AG04449 (cell line): ENCODE measurements at regions of chr1 and their contacts with region 1.

Region 1: DNA sequence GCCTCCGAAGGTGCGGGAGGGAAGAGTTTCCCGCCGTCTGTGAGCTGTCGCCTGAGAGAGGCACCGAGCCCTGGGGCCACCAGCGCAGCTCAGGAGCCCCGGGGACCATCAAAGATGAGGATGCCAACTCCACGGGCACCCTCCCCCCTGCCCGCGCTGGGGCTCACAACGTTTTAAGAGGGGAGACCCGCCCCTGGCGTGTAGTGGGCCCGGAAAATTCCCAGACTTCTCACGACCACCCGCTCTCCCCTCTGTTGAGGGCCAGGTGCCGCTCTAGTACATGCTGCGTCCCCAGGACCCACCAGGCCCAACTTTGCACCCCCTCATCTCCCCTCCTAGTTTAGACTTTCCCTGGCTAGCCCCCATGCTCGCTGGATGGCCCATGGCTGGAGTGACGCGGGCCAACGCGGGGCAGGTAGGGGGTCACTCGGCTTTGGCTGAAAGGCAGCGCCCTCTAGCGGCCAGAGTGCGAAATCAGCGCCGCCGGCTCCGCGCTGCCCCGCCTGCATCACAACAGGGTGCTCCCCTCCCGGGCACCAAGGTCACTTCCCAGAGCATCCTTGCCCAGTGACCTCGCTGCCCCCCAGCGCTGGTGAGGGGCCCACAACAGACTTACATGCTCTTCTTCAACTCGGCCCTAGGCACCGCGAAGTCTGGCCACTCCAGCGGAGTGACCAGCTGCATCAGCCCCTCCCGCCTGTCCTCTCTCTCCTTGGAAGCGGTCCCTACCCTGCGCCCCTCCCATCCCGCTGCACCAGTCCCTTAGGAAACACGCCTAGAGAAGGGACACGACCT is 1.8 kb downstream of the CD160 start:
- DNase-seq: no peak
- H3K4me3 ChIP-seq: peak overlapping the region; percentile 55
- CTCF ChIP-seq: peak; percentile 90

Region 2: DNA sequence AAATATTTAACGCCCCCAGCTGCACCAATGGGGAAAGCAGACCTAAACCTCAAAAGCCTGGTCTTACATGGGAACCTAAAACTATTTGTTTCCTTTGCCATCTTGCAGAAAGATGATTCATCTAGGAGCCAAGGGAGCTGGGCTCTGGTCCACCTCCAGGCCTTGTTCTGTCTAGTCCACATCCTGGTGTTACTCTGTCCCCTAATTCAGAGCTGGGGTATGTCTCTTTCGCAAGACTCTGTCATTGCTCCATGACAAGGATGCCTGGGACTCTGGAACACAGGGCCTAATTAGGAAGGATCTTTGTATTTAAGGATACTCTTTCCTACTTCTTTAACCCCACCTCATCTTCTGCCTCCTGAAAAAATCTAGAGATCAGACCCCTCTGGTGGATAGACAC is 29.9 kb before region 1 on chr1:
- CTCF ChIA-PET with region 1: interaction called, 18 read pairs
- POLR2A ChIA-PET with region 1: no interaction called
- DNase-seq: peak; percentile 62
- H3K4me3 ChIP-seq: no peak overlapping the region
- CTCF ChIP-seq: no peak

Region 3: GRCh38 chr1:145706086-145706680 is 14.9 kb before region 1 on chr1:
- CTCF ChIA-PET with region 1: interaction called, 42 read pairs
- POLR2A ChIA-PET with region 1: no interaction called
- DNase-seq: no peak
- H3K4me3 ChIP-seq: no peak overlapping the region
- CTCF ChIP-seq: no peak

Region 4: DNA sequence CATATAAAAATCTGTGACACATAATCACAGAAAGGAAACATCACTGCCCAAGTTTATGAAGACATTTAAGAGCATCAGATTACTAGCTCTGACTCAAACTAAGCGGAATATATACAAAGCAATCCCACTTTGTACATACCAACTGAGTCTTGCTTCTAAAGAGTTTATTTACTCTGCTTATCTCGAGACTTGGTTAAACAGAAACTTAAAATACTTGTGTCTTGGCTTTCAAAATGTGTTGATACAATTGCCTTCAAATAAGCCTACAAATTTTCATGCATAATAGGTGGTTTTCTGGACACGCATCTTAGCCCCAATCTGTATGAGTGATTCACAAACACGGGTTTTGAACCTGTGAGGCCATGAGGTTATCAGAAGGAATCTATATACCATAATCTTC is 19.2 kb after region 1 on chr1:
- CTCF ChIA-PET with region 1: interaction called, 53 read pairs
- POLR2A ChIA-PET with region 1: no interaction called
- DNase-seq: peak; percentile 74
- H3K4me3 ChIP-seq: no peak overlapping the region
- CTCF ChIP-seq: no peak

Region 5: DNA sequence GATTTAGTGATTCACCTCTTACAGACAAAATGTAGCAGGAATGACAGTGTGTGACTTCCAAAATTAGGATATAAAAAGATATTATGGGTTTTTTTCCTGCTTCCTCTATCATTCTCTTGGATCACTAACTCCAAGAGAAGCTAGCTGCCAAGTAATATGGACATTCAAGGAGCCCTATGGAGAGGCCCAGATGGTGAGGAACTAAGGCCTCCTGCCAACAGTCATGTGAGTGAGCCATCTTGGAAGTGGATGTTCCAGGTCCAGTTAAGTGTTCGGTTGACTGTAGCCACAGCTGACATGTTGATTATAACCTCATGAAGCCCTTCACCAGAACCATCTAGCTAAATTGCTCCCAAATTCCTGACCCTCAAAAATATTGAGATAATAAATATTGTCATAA is 37.0 kb after region 1 on chr1:
- CTCF ChIA-PET with region 1: interaction called, 12 read pairs
- POLR2A ChIA-PET with region 1: no interaction called
- DNase-seq: no peak
- H3K4me3 ChIP-seq: no peak overlapping the region
- CTCF ChIP-seq: no peak

Region 6: DNA sequence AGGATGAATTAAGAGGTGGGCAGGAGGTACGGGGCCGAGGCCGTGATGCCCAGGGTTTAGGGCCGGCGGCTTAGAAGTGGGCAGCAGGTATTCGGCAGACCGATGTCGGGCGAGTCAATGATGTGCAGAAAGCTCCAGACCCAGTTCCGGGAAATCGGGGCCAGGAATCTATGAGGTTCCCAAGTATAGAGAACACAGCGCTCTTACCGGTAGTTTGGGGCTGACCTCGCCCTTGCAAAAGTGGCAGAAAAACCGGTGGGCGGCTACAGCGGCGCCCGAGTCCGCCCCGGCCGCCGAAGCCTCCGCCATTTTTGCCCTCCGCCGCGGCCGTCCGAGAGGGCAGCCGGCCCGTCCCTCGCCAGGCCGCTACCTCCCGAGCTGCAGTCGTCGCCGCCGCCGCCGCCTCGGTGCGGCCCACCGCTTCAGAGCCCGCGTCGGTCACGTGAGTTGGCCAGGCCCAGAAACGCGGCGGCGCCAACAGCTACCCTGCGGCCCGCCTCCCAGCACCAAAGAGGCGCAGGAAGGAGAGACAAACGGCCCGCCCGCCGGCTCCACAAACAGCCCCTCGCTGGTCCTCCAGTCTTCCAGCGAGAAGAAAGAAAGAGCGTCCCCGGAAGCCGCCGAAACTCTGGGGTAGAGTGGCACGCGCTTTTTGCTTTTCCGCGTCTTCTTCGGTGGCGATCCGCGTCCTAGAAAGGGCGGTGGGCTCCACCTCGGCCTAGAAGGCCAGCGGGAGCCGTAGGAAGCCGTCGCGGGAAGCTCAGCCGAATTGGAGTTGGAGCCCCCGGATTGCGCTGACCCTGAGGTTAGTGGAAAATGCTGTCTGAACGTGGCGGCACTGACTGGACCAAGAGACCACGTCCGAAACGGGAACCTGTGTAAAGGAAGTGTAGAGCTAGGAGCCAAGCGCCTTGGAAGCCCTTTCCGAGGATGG is 102.8 kb after region 1 on chr1 and contains the starts of genes POLR3C and RNF115:
- CTCF ChIA-PET with region 1: interaction called, 11 read pairs
- POLR2A ChIA-PET with region 1: no interaction called
- DNase-seq: peak; percentile 36
- H3K4me3 ChIP-seq: peak within 1 kb of the TSS; percentile 82
- CTCF ChIP-seq: no peak

Region 7: GRCh38 chr1:145957443-145958319 is 236.6 kb after region 1 on chr1 and contains the start of gene LIX1L:
- CTCF ChIA-PET with region 1: no interaction called
- POLR2A ChIA-PET with region 1: no interaction called
- DNase-seq: no peak
- H3K4me3 ChIP-seq: peak within 1 kb of the TSS; percentile 82
- CTCF ChIP-seq: no peak